Thyroid gland (tissue), 4 donors: ENCODE measurements at regions of chr3 and their contacts with region 1.

Region 1: GRCh38 chr3:46629551-46630517 is 17.5 kb downstream of the FAM240A start:
- DNase-seq: peak; percentile 86 to 89
- H3K4me3 ChIP-seq: no peak overlapping the region
- H3K27ac ChIP-seq: peak overlapping the region; percentile 50 to 87 (median 53)
- H3K4me1 ChIP-seq: peaks cover 16% of the 10 kb centered on the region in 2 donors
- H3K27me3 ChIP-seq: no peaks in the 10 kb centered on the region
- CTCF ChIP-seq: peak; percentile 96 to 100 (median 99)
- POLR2A ChIP-seq: peak in 1 of 2 donors; percentile 61

Region 2: DNA sequence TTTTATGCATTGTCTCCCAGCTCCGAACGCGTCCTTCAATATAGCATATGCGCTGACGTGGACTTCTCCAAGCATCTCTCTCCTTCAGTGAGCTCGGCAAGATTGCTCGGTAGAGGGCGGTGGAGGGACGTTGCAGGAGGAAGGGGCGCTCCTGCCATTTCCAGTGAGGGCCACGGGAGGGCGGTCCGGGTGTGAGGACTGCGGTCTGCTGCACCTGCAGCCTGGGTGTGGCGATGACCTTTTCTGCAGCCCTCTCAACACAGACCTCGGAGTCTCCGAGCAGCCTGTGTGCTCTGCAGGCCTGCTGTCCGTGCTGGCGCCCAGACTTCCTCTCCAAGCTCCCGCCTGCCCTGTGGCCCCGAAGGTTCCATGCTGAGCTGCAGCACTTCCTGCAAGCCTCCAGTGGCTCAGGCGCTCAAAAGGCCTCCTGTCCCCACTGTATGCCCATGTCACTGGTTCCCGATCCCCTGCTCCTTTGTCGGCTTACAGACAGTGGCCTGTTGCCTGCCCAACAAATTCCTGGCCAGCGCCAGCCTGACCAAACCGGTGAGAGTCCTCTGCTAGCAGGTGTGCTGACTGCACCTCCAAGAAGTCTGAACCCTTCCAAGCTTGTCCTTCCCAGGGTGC is 141.0 kb before region 1 on chr3:
- intact Hi-C with region 1: loop called (anchors 2 kb)
- DNase-seq: peak; percentile 98
- H3K4me3 ChIP-seq: no peak overlapping the region
- H3K27ac ChIP-seq: peak overlapping the region; percentile 42 to 69 (median 57)
- H3K4me1 ChIP-seq: peaks cover 35 to 46% of the 10 kb centered on the region in 2 donors
- H3K27me3 ChIP-seq: no peaks in the 10 kb centered on the region
- CTCF ChIP-seq: peak; percentile 93 to 100 (median 99)
- POLR2A ChIP-seq: peak in 1 of 2 donors; percentile 21

Region 3: DNA sequence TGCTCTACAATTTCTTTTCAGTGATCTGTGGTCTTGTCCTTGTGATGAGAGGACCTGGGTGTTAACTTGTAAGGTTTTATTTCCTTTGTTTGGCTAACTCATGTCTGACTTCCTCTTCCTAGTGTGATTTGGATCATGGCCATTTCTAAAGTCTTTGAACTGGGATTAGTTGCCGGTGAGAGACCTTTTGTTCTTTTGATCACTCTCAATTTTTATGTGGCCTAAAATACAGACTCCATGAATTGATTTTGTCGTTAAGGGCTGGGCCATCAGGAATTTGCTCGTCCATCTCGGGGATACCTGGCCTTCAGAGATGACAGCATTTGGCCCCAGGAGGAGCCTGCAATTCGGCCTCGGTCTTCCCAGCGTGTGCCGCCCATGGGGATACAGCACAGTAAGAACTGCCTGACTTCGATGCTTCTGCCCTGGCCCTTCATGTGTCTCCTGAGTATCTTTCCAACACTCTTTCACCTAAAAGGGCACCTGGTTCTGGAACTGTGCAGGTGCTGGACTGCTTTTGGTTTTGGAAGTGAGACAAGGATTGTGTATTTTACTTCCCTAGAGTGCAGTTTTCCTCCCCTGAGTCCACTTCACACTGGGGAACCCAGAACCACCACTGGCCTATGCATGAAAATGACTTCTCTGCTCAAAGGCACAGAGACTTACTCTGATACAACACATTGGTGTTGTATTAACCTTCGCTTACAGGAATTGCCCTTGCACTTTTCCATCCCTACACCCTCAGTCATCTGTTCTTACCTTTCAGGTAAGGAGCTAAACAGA is 50.7 kb before region 1 on chr3:
- intact Hi-C with region 1: loop called (anchors 10 kb)
- DNase-seq: peak; percentile 27 to 33
- H3K4me3 ChIP-seq: no peak overlapping the region
- H3K27ac ChIP-seq: peak overlapping the region; percentile 78 to 94 (median 78)
- H3K4me1 ChIP-seq: peaks cover 19 to 35% of the 10 kb centered on the region in 2 donors
- H3K27me3 ChIP-seq: no peaks in the 10 kb centered on the region
- CTCF ChIP-seq: no peak
- POLR2A ChIP-seq: no peak